ENCODE measurements at regions of chr3 and their contacts with region 1.

Region 1: GRCh38 chr3:79543218-79543982 is 224.4 kb downstream of the ROBO1 start:
- DNase-seq: no peak
- ATAC-seq: no peak
- H3K4me3 ChIP-seq: no peak overlapping the region
- H3K27ac ChIP-seq: no peak overlapping the region
- H3K4me1 ChIP-seq: no peaks in the 10 kb centered on the region
- H3K27me3 ChIP-seq: no peaks in the 10 kb centered on the region
- CTCF ChIP-seq: no peak

Region 2: GRCh38 chr3:79558943-79559342 is 15.5 kb after region 1 on chr3:
- CTCF ChIA-PET with region 1: no interaction called
- POLR2A ChIA-PET with region 1: no interaction called
- in situ Hi-C with region 1: no loop called
- intact Hi-C with region 1: loop called (anchors 1 kb)
- DNase-seq: no peak
- ATAC-seq: no peak
- H3K4me3 ChIP-seq: no peak overlapping the region
- H3K27ac ChIP-seq: no peak overlapping the region
- H3K4me1 ChIP-seq: no peaks in the 10 kb centered on the region
- H3K27me3 ChIP-seq: no peaks in the 10 kb centered on the region
- CTCF ChIP-seq: no peak

Measured in Panc1 (cell line).